Activated CD8-positive, alpha-beta T cell treated with anti-CD3 and anti-CD28 coated beads, Interleukin-2, amount 10 ng/mL, durations not matched to agents 7 days and 5 days (primary cell): ENCODE measurements at regions of chr3 and their contacts with region 1.

Region 1: GRCh38 chr3:129942296-129942695 is 32.2 kb upstream of the TRH start:
- DNase-seq: peak; percentile 52
- ATAC-seq: peak; percentile 72
- H3K4me3 Mint-ChIP-seq: no peak overlapping the region
- H3K27ac Mint-ChIP-seq: no peak overlapping the region
- H3K4me1 Mint-ChIP-seq: no peaks in the 10 kb centered on the region
- H3K27me3 Mint-ChIP-seq: peaks cover 10% of the 10 kb centered on the region

Region 2: GRCh38 chr3:129627429-129628168 is 314.7 kb before region 1 on chr3:
- CTCF ChIA-PET with region 1: interaction called, 13 read pairs
- POLR2A ChIA-PET with region 1: no interaction called
- DNase-seq: peak; percentile 77
- ATAC-seq: peak; percentile 52
- H3K4me3 Mint-ChIP-seq: peak overlapping the region; percentile 75
- H3K27ac Mint-ChIP-seq: peak overlapping the region; percentile 76
- H3K4me1 Mint-ChIP-seq: peaks cover 26% of the 10 kb centered on the region
- H3K27me3 Mint-ChIP-seq: peaks cover 11% of the 10 kb centered on the region

Region 3: GRCh38 chr3:130093741-130094391 is 151.6 kb after region 1 on chr3:
- CTCF ChIA-PET with region 1: interaction called, 23 read pairs
- POLR2A ChIA-PET with region 1: no interaction called
- DNase-seq: peak; percentile 54
- ATAC-seq: no peak
- H3K4me3 Mint-ChIP-seq: peak overlapping the region; percentile 62
- H3K27ac Mint-ChIP-seq: peak overlapping the region; percentile 82
- H3K4me1 Mint-ChIP-seq: peaks cover 42% of the 10 kb centered on the region
- H3K27me3 Mint-ChIP-seq: no peaks in the 10 kb centered on the region

Region 4: GRCh38 chr3:130111185-130111864 is 169.0 kb after region 1 on chr3:
- CTCF ChIA-PET with region 1: interaction called, 26 read pairs
- POLR2A ChIA-PET with region 1: no interaction called
- DNase-seq: peak; percentile 99
- ATAC-seq: peak; percentile 100
- H3K4me3 Mint-ChIP-seq: peak overlapping the region; percentile 94
- H3K27ac Mint-ChIP-seq: peak overlapping the region; percentile 100
- H3K4me1 Mint-ChIP-seq: peaks cover 23% of the 10 kb centered on the region
- H3K27me3 Mint-ChIP-seq: no peaks in the 10 kb centered on the region